Astrocyte of the cerebellum (primary cell): ENCODE measurements at regions of chr22 and their contacts with region 1.

Region 1: GRCh38 chr22:25182131-25183110 is 17.2 kb upstream of the CRYBB3 start:
- DNase-seq: no peak
- H3K4me3 ChIP-seq: no peak overlapping the region
- CTCF ChIP-seq: no peak

Region 2: GRCh38 chr22:24875862-24876506 is 306.4 kb before region 1 on chr22:
- in situ Hi-C with region 1: loop called (anchors 10 kb)
- DNase-seq: no peak
- H3K4me3 ChIP-seq: no peak overlapping the region
- CTCF ChIP-seq: no peak

Region 3: GRCh38 chr22:25153961-25154666 is 28.3 kb before region 1 on chr22:
- in situ Hi-C with region 1: loop called (anchors 5 kb)
- DNase-seq: peak; percentile 45
- H3K4me3 ChIP-seq: no peak overlapping the region
- CTCF ChIP-seq: no peak